Dorsolateral prefrontal cortex (tissue), 120 donors: ENCODE measurements at regions of chr3 and their contacts with region 1.

Region 1: GRCh38 chr3:48504051-48504946 is at the start of gene SHISA5:
- DNase-seq: peak in 9 of 10 donors; percentile 35 to 82 (median 64)
- H3K4me3 ChIP-seq: peak within 1 kb of the TSS; percentile 55 to 88 (median 76)
- H3K27ac ChIP-seq: peak within 1 kb of the TSS; percentile 26 to 95 (median 89)
- H3K27me3 ChIP-seq: no peaks in the 10 kb centered on the region
- CTCF ChIP-seq: peak in 2 of 56 donors; percentile 12 to 24
- total RNA-seq, gene SHISA5: 71.6 to 162 (median 99.2) TPM

Region 2: GRCh38 chr3:48039487-48040190 is 464.7 kb before region 1 on chr3:
- intact Hi-C with region 1: no loop called
- DNase-seq: no peak
- H3K4me3 ChIP-seq: peak overlapping the region in 28 of 59 donors; percentile 2 to 43 (median 24)
- H3K27ac ChIP-seq: peak overlapping the region; percentile 54 to 96 (median 86)
- H3K27me3 ChIP-seq: no peaks in the 10 kb centered on the region
- CTCF ChIP-seq: no peak

Region 3: DNA sequence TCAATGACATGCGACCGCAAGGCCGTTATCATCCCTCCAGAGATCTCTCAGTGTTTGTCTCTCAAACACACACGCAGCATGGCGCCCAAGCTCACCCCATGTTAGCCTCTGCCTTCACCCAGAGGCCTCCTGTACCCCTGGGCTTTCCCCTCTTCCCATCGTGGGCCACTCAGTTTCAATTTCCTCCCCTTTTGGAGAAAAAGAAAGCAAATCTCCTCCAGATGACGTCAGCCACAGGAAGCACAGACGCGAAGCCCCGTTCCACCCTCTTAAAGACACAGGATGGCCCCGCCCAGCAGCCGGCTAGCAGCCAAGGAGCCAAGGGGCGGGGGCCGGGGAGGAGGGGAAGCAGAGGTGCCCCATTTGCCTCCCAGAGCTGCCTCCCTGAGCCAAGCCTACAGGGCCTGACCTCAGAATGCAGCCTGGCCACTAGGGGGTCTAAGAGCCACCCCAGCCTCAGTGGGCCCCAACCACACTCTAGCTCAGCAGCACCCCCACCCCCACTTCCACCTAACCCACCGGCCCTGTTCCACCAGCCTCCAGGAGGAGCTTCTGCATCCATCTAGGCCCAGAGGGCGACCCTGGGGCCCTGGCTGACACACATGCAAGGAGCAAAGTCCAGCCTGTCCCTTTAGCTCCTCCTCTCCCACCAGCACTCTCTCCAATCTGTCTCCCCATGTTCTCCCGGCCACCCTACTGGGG is 31.2 kb before region 1 on chr3:
- intact Hi-C with region 1: loop called in 1 of 2 experiments (anchors 1 kb)
- DNase-seq: peak; percentile 62 to 87 (median 82)
- H3K4me3 ChIP-seq: peak overlapping the region; percentile 57 to 94 (median 82)
- H3K27ac ChIP-seq: peak overlapping the region; percentile 86 to 100 (median 96)
- H3K27me3 ChIP-seq: no peaks in the 10 kb centered on the region
- CTCF ChIP-seq: peak in 55 of 56 donors; percentile 30 to 73 (median 56)

Region 4: DNA sequence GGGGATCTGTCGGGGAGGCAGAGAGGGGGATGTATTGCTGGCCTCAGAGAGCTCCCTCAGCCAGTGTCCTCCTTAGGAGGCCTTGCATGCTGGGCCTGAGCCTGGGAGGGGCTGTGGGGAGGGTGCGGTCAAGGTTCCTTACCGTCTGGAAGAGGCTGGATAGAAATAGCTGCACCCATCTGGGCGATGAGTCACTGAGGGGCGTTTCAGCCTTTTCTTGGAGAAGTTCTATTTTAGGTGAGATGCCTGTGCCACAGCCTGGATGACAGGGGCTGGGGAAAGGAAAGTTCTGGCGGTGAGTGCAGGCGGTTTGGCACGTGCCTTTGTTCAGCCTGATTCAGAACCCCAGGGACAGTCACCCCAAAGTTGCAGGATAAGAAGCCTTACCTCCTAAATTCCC is 1134.1 kb after region 1 on chr3:
- intact Hi-C with region 1: no loop called
- DNase-seq: peak in 8 of 10 donors; percentile 41 to 88 (median 78)
- H3K4me3 ChIP-seq: no peak overlapping the region
- H3K27ac ChIP-seq: peak overlapping the region in 58 of 59 donors; percentile 3 to 94 (median 77)
- H3K27me3 ChIP-seq: no peaks in the 10 kb centered on the region
- CTCF ChIP-seq: no peak